ENCODE measurements at regions of chr16 and their contacts with region 1.

Region 1: GRCh38 chr16:48054881-48055601 is 100.8 kb downstream of the ABCC12 start:
- DNase-seq: peak; percentile 55
- H3K4me3 Mint-ChIP-seq: no peak overlapping the region
- H3K27ac Mint-ChIP-seq: no peak overlapping the region
- H3K4me1 Mint-ChIP-seq: peaks cover 3% of the 10 kb centered on the region
- H3K27me3 Mint-ChIP-seq: peaks cover 29% of the 10 kb centered on the region

Region 2: GRCh38 chr16:46947900-46948547 is 1107.0 kb before region 1 on chr16:
- CTCF ChIA-PET with region 1: no interaction called
- intact Hi-C with region 1: loop called (anchors 2 kb)
- DNase-seq: peak; percentile 63
- H3K4me3 Mint-ChIP-seq: no peak overlapping the region
- H3K27ac Mint-ChIP-seq: no peak overlapping the region
- H3K4me1 Mint-ChIP-seq: peaks cover 14% of the 10 kb centered on the region
- H3K27me3 Mint-ChIP-seq: no peaks in the 10 kb centered on the region

Region 3: DNA sequence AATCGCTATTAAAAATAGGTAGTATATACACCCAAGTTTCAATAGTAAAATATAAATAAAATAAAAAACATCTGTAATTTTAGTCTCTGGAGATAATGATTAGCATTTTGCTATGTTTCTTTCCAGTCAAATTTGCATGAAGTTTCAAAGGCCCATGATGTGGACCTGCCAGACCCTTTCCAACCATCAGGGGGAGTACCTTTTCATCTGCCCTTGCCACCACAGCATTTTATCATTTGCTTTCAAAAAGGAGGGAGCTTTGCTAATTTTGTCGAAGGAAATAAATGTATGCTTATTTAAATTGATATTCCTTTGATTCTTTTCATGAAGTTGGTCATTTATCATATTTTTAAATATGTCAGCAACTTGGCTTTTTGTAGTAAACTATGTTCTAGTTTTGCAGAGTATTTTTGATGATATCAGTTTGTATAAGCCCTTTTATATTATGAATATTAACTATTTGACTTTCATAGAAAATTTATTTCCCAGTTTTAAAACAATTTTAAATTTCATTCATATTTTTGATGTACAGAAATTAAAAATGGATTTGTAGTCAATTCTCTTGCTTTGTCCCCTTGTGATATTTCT is 796.1 kb before region 1 on chr16:
- CTCF ChIA-PET with region 1: no interaction called
- intact Hi-C with region 1: loop called (anchors 10 kb)
- DNase-seq: peak; percentile 15
- H3K4me3 Mint-ChIP-seq: no peak overlapping the region
- H3K27ac Mint-ChIP-seq: no peak overlapping the region
- H3K4me1 Mint-ChIP-seq: no peaks in the 10 kb centered on the region
- H3K27me3 Mint-ChIP-seq: no peaks in the 10 kb centered on the region

Region 4: DNA sequence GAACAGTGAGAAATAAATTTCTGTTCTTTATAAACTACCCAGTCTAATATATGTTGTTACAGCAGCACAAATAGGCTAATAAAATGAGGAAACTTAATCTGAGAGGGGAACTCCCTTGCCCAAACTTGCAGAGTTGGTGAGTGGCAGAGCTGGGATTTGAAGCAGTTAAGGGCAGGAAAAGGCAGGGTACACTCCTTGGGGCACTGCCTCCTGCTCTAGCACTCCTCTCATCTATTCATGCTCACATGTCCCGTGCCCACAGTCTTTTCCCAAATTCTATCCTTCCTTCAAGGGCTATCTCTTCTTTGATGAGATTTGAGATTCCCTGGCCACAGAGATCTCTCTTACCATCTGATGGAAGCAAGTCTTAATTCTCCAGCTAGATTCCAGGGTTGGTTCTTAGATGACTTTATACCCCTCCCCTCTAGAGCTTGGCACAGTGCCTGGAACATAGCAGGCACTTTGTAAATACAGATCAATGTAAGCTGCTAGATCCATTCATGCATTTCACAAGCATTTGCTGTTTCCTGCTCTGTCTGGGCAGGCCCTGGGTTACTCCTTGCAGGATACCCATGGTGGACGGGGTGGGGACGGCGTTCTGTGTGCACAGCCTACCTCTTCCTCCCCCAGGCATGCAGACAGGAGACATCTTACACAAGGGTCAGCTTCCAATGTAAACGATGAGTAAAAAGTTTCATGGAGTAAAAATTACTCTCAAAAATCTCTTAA is 140.0 kb after region 1 on chr16:
- CTCF ChIA-PET with region 1: no interaction called
- intact Hi-C with region 1: no loop called
- DNase-seq: no peak
- H3K4me3 Mint-ChIP-seq: no peak overlapping the region
- H3K27ac Mint-ChIP-seq: no peak overlapping the region
- H3K4me1 Mint-ChIP-seq: no peaks in the 10 kb centered on the region
- H3K27me3 Mint-ChIP-seq: no peaks in the 10 kb centered on the region